K562 (cell line): ENCODE measurements at regions of chr5 and their contacts with region 1.

Region 1: DNA sequence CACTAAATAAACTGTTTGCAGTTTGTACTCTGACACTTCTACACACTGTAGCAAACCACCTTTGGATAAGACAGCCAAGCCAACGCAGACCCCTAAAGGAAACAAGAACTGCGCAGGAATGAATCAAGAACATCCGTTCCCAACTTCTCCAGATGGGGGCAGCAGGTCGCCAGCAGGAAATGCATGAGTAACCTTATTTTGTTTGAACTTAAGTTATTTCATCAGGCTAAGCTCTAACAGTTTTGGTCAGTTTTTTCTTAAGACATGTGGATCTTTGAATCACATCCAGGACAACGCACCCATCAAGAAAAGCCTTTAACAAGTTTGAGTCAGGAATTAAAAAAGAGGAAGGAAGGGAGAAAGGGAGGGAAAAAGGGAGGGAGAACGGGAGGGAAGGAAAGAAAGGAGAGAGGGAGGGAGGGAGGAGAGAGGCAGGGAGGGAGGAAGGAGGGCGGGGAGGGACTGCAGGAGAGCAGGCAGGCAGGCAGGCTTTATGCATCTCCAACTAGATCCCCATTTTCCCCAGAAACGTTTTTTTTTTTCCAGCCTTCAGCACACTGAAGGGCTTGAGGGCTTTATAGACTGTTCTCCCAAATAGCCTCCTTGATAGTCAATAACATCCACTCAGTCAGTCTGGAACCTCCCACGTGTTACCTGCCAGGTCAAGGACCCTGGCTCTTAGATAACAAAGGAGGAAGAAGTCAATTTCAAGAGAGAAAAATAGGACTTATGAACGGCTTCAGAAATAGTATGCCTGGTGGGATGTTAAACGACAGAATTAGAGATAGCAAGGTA is 22.2 kb downstream of the BHMT start:
- DNase-seq: peak; percentile 49 to 83 (median 52)
- ATAC-seq: peak; percentile 89
- H3K4me3 ChIP-seq: 0 out of 2 replicates have a peak overlapping the region, but pooled peaks have one; percentile 7
- H3K27ac ChIP-seq: peak overlapping the region; percentile 27; the same call in 1 of the 3 replicates
- H3K4me1 ChIP-seq: peaks cover 3% of the 10 kb centered on the region in 2 experiments; a peak in 1 of 5 replicates
- H3K27me3 ChIP-seq: no peaks in the 10 kb centered on the region
- CTCF ChIP-seq: peak; percentile 84 to 90 (median 87)
- EP300 ChIP-seq: peak; percentile 50
- POLR2A ChIP-seq: no peak
- RAD21 ChIP-seq: peak; percentile 77 to 82

Region 2: DNA sequence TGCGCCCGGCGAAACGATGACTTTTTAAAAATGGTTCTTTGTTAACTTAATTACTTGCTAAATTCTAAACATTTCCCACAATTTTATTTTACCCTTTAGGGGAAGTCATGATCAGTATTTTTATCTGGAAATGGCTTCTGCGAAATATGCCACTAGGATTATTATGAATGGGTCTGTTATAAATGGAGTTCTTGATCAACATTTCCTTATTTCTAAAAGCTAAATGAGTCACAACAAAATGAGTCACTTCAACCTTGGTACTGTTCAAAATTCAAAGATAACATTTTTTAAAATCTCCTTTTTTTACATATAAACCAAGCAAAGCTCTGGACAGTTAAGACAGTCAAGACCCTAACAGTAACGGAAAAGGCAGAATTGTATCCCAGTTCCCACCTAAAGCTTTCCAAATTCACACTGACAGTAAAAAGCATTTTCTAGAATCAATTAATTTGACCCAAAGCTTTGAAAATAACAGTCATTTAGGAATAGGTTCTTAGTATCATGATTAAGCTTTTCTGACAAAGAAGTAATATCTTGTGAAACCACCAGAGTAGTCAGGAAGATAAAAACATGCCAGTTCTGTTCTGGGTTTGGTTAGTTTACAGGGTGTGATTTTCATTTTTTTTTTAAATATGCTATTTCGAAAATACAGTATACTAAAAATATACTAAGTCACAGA is 567.0 kb before region 1 on chr5:
- CTCF ChIA-PET with region 1: no interaction called
- POLR2A ChIA-PET with region 1: no interaction called
- in situ Hi-C with region 1: no loop called
- intact Hi-C with region 1: no loop called
- DNase-seq: no peak
- ATAC-seq: no peak
- H3K4me3 ChIP-seq: no peak overlapping the region
- H3K27ac ChIP-seq: no peak overlapping the region
- H3K4me1 ChIP-seq: peaks cover 0 to 10% of the 10 kb centered on the region in 2 experiments; a peak in 2 of 5 replicates
- H3K27me3 ChIP-seq: no peaks in the 10 kb centered on the region
- CTCF ChIP-seq: no peak
- EP300 ChIP-seq: no peak
- POLR2A ChIP-seq: no peak
- RAD21 ChIP-seq: no peak

Region 3: GRCh38 chr5:78899922-78900362 is 233.9 kb before region 1 on chr5:
- CTCF ChIA-PET with region 1: interaction called, 3 read pairs
- POLR2A ChIA-PET with region 1: no interaction called
- in situ Hi-C with region 1: no loop called
- intact Hi-C with region 1: loop called (anchors 5 kb)
- DNase-seq: peak; percentile 55 to 74 (median 62)
- ATAC-seq: peak; percentile 86
- H3K4me3 ChIP-seq: no peak overlapping the region
- H3K27ac ChIP-seq: no peak overlapping the region
- H3K4me1 ChIP-seq: no peaks in the 10 kb centered on the region
- H3K27me3 ChIP-seq: peaks cover 0 to 4% of the 10 kb centered on the region in 2 experiments; a peak in 2 of 5 replicates
- CTCF ChIP-seq: peak; percentile 81 to 90 (median 83)
- EP300 ChIP-seq: no peak
- POLR2A ChIP-seq: no peak
- RAD21 ChIP-seq: peak; percentile 71 to 90

Region 4: GRCh38 chr5:79086116-79086515 is 47.7 kb before region 1 on chr5:
- CTCF ChIA-PET with region 1: no interaction called
- POLR2A ChIA-PET with region 1: no interaction called
- in situ Hi-C with region 1: no loop called
- intact Hi-C with region 1: no loop called
- DNase-seq: no peak
- ATAC-seq: no peak
- H3K4me3 ChIP-seq: no peak overlapping the region
- H3K27ac ChIP-seq: no peak overlapping the region
- H3K4me1 ChIP-seq: no peaks in the 10 kb centered on the region
- H3K27me3 ChIP-seq: peaks cover 20% of the 10 kb centered on the region in 2 experiments
- CTCF ChIP-seq: no peak
- EP300 ChIP-seq: no peak
- POLR2A ChIP-seq: no peak
- RAD21 ChIP-seq: no peak

Region 5: DNA sequence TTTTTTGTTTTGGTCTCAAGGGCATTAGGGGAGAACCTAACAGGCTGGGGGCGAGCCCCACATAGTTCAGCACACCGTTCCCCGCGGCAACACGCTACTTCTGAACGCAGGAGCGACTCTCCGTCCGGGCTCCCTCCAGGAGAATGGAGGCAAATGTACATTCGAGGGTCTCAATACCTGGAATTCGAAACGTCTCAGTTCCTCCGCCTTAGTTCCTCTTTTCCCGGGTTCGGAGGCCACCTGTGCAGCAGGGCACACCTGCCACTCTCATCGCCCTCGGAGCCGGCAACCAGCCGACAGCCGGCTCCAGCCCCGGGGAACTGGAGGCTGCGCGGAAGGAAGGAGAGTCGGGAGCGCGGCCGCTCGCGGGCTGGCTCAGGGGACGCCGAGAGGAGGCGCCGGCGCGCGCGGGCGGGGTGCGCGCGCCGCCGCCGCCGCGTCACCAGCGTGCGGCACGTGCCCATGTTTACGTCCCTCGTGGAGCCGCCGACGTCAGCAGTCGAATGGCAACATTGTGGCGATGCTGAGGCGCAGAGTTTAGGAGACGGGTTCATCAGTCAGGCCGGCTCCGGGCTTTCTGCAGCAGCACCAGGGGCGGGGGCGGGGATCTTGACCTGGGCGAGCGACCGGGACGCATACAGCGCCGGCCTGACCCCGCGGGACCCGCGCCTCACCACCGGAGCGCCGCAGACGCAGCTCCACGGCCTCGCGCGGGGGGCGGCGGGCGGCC is 101.9 kb after region 1 on chr5 and contains the start of gene JMY:
- CTCF ChIA-PET with region 1: no interaction called
- POLR2A ChIA-PET with region 1: interaction called, 3 read pairs
- in situ Hi-C with region 1: no loop called
- intact Hi-C with region 1: loop called (anchors 5 kb)
- DNase-seq: peak; percentile 90
- ATAC-seq: peak; percentile 81
- H3K4me3 ChIP-seq: peak within 1 kb of the TSS; percentile 52
- H3K27ac ChIP-seq: peak within 1 kb of the TSS; percentile 73
- H3K4me1 ChIP-seq: peaks cover 0 to 20% of the 10 kb centered on the region in 2 experiments; a peak in 3 of 5 replicates
- H3K27me3 ChIP-seq: no peaks in the 10 kb centered on the region
- CTCF ChIP-seq: no peak
- EP300 ChIP-seq: no peak
- POLR2A ChIP-seq: peak; percentile 92
- RAD21 ChIP-seq: peak in 1 of 2 experiments; percentile 3; a peak in 1 of 4 replicates
- polyA plus RNA-seq, gene JMY: 1.1 TPM

Region 6: DNA sequence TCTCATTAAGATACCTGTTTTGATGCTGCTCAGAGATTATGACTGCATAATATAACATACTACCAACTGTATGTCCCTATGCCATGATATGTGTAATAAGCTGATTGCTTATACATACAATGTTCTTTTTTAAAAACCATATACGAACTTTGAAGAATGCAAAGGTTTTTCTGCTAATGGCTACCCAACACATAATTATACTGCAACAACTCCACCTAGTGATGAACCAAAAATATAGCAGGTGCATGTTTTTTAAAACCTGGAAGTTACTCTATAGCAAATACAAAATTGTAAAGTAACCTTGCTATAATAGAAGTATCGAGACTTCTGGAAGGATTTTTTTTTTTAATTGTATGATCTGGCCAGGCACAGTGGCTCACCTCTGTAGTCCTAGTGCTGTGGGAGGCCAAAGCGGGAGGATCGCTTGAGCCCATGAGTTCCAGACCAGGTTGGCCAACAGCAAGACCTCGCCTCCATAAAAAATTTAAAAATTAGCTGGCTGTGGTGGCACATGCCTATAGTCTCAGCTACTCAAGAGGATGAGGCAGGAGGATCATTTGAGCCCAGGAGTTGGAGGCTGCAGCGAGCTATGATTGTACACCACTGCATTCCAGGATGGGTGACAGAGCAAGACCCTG is 331.0 kb after region 1 on chr5:
- CTCF ChIA-PET with region 1: interaction called, 45 read pairs
- POLR2A ChIA-PET with region 1: no interaction called
- in situ Hi-C with region 1: loop called (anchors 10 kb)
- intact Hi-C with region 1: loop called (anchors 1 kb)
- DNase-seq: peak in 3 of 4 experiments; percentile 12 to 37 (median 16)
- ATAC-seq: peak; percentile 82
- H3K4me3 ChIP-seq: no peak overlapping the region
- H3K27ac ChIP-seq: no peak overlapping the region
- H3K4me1 ChIP-seq: no peaks in the 10 kb centered on the region
- H3K27me3 ChIP-seq: no peaks in the 10 kb centered on the region
- CTCF ChIP-seq: peak; percentile 30 to 79 (median 49); a peak in 4 of 6 replicates
- EP300 ChIP-seq: no peak
- POLR2A ChIP-seq: no peak
- RAD21 ChIP-seq: peak; percentile 81

Region 7: DNA sequence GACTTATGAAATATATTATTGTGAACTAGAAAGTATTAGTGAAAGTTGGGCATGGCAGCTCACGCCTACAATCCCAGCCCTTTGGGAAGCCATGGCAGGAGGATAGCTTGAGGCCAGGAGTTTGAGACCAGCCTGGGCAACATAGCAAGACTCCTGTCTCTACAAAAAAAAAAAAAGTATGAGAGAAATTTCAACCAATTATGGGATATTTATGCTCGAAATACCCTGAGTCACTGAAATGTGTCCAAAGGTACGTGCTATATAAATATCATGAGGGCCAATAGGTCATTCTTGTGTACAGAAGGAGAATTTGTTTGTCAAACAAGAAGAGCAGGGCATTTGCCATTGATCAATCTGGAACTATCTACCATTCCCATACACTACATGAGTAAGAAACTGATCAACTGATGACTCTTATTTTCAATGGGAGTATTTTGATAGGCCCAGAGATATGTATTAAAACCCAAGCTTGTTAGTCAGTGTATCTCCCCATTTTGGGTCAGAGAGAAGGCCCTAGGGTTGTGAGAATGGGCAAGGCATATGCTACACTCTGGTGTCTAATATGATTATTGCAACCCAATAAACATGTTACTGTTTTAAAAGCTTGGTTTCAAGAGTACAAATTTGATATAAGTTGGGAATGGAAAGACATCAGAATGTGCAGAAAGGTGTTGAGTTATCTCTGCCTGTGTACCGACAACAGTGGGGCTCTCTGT is 401.8 kb after region 1 on chr5:
- CTCF ChIA-PET with region 1: no interaction called
- POLR2A ChIA-PET with region 1: interaction called, 3 read pairs
- in situ Hi-C with region 1: no loop called
- intact Hi-C with region 1: loop called (anchors 5 kb)
- DNase-seq: no peak
- ATAC-seq: peak; percentile 64; the same call in 2 of the 3 replicates
- H3K4me3 ChIP-seq: no peak overlapping the region
- H3K27ac ChIP-seq: no peak overlapping the region
- H3K4me1 ChIP-seq: no peaks in the 10 kb centered on the region
- H3K27me3 ChIP-seq: no peaks in the 10 kb centered on the region
- CTCF ChIP-seq: peak in 2 of 3 experiments; percentile 19 to 33; a peak in 2 of 6 replicates
- EP300 ChIP-seq: no peak
- POLR2A ChIP-seq: no peak
- RAD21 ChIP-seq: peak in 1 of 2 experiments; percentile 54; a peak in 2 of 4 replicates